ENCODE measurements at regions of chr4 and their contacts with region 1.

Region 1: DNA sequence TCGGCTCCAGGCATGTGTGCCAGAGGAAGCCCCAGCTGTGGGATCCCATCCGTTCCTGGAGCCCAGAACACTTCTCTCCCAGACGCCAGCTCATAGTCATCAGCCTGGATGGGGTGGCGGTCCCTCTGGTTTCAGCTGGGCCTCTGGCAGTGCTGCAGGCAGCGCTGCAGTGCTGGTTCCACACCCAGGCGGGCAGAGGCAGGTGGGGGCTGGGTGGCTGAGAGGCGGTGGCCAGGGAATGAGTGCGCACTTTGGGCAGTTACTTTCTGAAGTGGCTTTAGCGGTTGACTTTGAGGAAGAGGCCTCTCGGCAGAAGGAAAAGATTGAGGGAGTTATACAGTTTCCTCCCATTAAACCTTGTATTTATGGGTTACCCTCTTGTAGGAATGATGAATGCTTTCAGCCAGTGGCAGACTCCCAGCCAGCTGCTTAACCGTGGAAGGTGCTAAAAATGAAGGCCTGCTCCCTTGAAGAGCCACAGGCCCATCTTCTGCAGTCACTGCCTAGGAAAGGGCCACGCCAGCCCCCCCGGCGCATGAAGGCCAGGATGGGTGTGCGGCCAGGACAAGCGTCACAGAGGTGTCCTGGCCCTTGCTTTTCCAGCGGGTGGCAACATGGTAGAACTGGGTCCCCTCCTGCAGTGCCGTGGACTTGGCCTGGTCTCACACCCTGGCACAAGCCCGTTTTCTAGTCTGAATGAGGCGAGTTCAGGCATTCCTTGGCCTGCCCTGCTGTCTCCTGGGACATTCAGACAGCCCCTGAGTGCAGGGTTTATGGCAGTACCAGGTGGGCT is 9.9 kb downstream of the TADA2B start:
- DNase-seq: peak; percentile 49
- H3K4me3 Mint-ChIP-seq: no peak overlapping the region
- H3K27ac Mint-ChIP-seq: peak overlapping the region; percentile 80
- H3K4me1 Mint-ChIP-seq: peaks cover 41% of the 10 kb centered on the region
- H3K27me3 Mint-ChIP-seq: no peaks in the 10 kb centered on the region

Region 2: GRCh38 chr4:7042697-7043464 is 10.2 kb before region 1 on chr4 and contains the start of gene TADA2B:
- CTCF ChIA-PET with region 1: interaction called, 19 read pairs
- DNase-seq: peak; percentile 93
- H3K4me3 Mint-ChIP-seq: peak within 1 kb of the TSS; percentile 94
- H3K27ac Mint-ChIP-seq: peak within 1 kb of the TSS; percentile 89
- H3K4me1 Mint-ChIP-seq: peaks cover 46% of the 10 kb centered on the region
- H3K27me3 Mint-ChIP-seq: peaks cover 20% of the 10 kb centered on the region